ENCODE measurements at regions of chrX and their contacts with region 1.

Region 1: GRCh38 chrX:19334945-19335626 is 8.6 kb upstream of the PDHA1 start:
- DNase-seq: no peak
- H3K4me3 ChIP-seq: no peak overlapping the region
- H3K27ac ChIP-seq: no peak overlapping the region
- H3K27me3 ChIP-seq: peaks cover 0 to 20% (median 0%) of the 10 kb centered on the region in 45 donors
- CTCF ChIP-seq: peak in 5 of 56 donors; percentile 5 to 23 (median 14)

Region 2: GRCh38 chrX:18390941-18391538 is 944.0 kb before region 1 on chrX:
- intact Hi-C with region 1: loop called (anchors 2 to 5 kb)
- DNase-seq: peak in 7 of 10 donors; percentile 42 to 86 (median 56)
- H3K4me3 ChIP-seq: no peak overlapping the region
- H3K27ac ChIP-seq: no peak overlapping the region
- H3K27me3 ChIP-seq: peaks cover 0 to 64% (median 10%) of the 10 kb centered on the region in 45 donors
- CTCF ChIP-seq: peak; percentile 52 to 94 (median 85)

Region 3: DNA sequence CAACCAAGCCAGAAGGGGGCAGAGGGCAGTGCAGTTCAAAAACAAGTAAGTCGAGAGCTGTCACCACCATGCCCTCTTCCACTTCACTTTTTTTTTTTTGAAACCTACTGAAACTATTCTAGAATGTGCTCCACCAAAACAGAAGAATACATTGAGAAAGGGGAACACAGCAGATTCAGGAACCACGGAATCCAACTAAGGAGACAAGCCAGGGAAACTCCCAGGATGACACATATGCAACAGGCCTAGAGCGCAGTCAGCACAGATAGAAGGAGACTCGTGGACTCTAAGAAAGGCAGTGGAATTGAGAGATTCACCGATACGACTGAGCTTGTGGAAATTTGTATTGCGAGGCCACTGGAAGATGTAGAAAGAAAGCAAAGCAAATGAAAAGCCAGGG is 417.3 kb before region 1 on chrX:
- intact Hi-C with region 1: no loop called
- DNase-seq: no peak
- H3K4me3 ChIP-seq: no peak overlapping the region
- H3K27ac ChIP-seq: no peak overlapping the region
- H3K27me3 ChIP-seq: peaks cover 0 to 27% (median 0%) of the 10 kb centered on the region in 45 donors
- CTCF ChIP-seq: no peak

Region 4: GRCh38 chrX:18931972-18932371 is 403.1 kb before region 1 on chrX:
- intact Hi-C with region 1: loop called (anchors 2 to 5 kb)
- DNase-seq: no peak
- H3K4me3 ChIP-seq: no peak overlapping the region
- H3K27ac ChIP-seq: no peak overlapping the region
- H3K27me3 ChIP-seq: peaks cover 0 to 61% (median 16%) of the 10 kb centered on the region in 45 donors
- CTCF ChIP-seq: peak in 53 of 56 donors; percentile 14 to 68 (median 46)

Region 5: DNA sequence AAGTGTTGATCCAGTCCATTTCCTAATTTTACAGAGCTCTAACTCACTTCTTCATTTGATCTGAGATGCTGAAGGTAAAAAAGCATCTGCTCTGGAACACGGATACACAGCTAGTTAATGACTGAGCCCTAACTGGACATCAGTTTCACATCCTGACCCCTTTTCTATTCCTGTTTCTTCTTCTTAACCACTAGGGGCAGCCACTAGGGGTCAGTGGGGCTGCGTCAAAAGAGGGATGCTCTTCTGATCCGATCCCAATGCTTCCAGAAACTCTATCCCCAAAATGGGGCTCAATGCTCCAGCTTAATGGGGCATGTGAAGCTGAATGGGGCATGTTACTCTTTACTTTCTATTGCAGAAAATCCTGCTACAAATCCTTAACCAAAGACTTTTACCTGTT is 317.8 kb before region 1 on chrX:
- intact Hi-C with region 1: loop called in 1 of 2 experiments (anchors 10 kb)
- DNase-seq: no peak
- H3K4me3 ChIP-seq: no peak overlapping the region
- H3K27ac ChIP-seq: no peak overlapping the region
- H3K27me3 ChIP-seq: peaks cover 0 to 55% (median 10%) of the 10 kb centered on the region in 45 donors
- CTCF ChIP-seq: peak in 50 of 56 donors; percentile 13 to 58 (median 38)

Region 6: GRCh38 chrX:19070555-19071049 is 264.5 kb before region 1 on chrX:
- intact Hi-C with region 1: no loop called
- DNase-seq: no peak
- H3K4me3 ChIP-seq: no peak overlapping the region
- H3K27ac ChIP-seq: no peak overlapping the region
- H3K27me3 ChIP-seq: peaks cover 0 to 56% (median 4%) of the 10 kb centered on the region in 45 donors
- CTCF ChIP-seq: no peak